ENCODE measurements at regions of chr1 and their contacts with region 1.

Region 1: GRCh38 chr1:235415008-235415904 is 48.0 kb downstream of the TBCE start:
- DNase-seq: peak in 7 of 10 donors; percentile 21 to 93 (median 55)

Region 2: GRCh38 chr1:234486498-234487448 is 928.5 kb before region 1 on chr1:
- intact Hi-C with region 1: loop called (anchors 10 kb)
- DNase-seq: peak in 6 of 10 donors; percentile 37 to 82 (median 52)

Region 3: DNA sequence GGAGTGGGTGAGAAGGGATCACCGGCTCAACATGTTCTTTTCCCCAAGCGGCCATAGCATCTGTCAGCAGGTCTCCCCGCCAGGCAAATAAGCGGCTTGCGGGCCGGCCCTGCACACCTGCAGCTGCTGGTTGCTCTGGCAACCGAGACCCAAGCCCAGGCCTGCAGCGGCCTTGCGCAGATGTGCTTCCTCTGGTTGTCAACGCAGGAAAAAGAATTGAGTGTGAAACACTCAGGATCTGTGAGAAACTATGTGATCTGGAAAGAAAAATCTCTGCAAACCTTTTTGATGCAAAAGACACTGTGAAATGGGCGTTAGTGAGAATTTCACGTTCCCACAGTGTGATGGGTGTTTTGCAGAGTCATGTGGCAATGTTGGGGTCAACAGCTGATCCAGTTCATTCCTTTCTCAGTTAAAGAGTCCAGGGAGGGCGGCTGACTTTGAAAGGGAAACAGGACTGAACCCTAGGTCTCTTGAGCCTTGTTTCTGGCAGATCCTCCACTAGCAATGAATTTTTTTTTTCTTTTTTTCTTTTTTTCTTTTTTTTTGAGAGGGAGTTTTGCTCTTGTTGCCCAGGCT is 315.0 kb before region 1 on chr1:
- intact Hi-C with region 1: loop called (anchors 5 kb)
- DNase-seq: no peak

Region 4: GRCh38 chr1:235253219-235253962 is 161.9 kb before region 1 on chr1:
- intact Hi-C with region 1: loop called (anchors 1 kb)
- DNase-seq: peak in 7 of 10 donors; percentile 44 to 90 (median 57)

Measured in posterior cingulate gyrus (tissue), 11 donors.